ENCODE measurements at regions of chr1 and their contacts with region 1.

Region 1: DNA sequence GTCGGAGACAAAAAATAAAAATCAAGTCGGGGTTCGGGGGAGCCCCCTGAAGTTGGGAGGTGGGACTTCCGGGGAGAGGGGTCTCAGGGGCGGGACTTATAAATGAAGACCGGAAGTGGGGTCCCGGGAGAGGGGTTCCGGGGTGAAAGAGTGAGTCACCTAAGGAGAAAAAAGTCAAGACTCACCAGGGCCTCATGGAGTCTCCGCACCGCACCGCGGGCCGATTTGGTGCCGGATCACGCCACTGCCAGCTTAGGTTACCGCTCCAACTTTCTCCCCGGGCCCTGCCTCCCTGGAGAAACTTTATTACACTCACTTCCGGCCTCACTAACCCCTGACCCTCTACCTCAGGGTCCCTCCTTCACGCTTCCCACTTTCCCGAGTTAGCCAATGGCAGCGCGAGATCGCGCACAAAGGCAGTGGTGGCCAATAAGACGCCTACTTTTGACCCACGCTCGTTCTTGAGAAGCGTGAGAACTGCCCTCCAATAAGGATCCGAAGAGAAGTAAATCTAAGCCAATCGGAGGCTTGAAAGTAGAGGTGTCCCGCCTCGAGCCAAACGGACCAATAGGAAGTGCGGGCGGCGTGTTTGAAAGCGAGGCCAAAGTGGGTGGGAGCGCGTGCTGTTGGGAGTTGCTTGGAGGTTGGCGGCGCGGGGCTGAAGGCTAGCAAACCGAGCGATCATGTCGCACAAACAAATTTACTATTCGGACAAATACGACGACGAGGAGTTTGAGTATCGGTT is at the start of gene CKS1B:
- DNase-seq: peak; percentile 99 to 100
- ATAC-seq: peak; percentile 65 to 77
- H3K4me3 ChIP-seq: peak within 1 kb of the TSS; percentile 65
- H3K27ac ChIP-seq: peak within 1 kb of the TSS; percentile 98 to 100
- H3K4me1 ChIP-seq: peaks cover 37% of the 10 kb centered on the region
- CTCF ChIP-seq: no peak
- EP300 ChIP-seq: no peak
- POLR2A ChIP-seq: peak; percentile 24; the same call in 1 of the 2 replicates
- RAD21 ChIP-seq: no peak
- polyA plus RNA-seq, gene CKS1B: 725 and 787 TPM in 2 replicates

Region 2: GRCh38 chr1:154884869-154885701 is 89.2 kb before region 1 on chr1:
- CTCF ChIA-PET with region 1: no interaction called
- POLR2A ChIA-PET with region 1: no interaction called
- DNase-seq: no peak
- ATAC-seq: no peak
- H3K4me3 ChIP-seq: no peak overlapping the region
- H3K27ac ChIP-seq: no peak overlapping the region
- H3K4me1 ChIP-seq: peaks cover 4% of the 10 kb centered on the region; the same call in 1 of the 3 replicates
- CTCF ChIP-seq: no peak
- EP300 ChIP-seq: no peak
- POLR2A ChIP-seq: no peak
- RAD21 ChIP-seq: no peak

Region 3: DNA sequence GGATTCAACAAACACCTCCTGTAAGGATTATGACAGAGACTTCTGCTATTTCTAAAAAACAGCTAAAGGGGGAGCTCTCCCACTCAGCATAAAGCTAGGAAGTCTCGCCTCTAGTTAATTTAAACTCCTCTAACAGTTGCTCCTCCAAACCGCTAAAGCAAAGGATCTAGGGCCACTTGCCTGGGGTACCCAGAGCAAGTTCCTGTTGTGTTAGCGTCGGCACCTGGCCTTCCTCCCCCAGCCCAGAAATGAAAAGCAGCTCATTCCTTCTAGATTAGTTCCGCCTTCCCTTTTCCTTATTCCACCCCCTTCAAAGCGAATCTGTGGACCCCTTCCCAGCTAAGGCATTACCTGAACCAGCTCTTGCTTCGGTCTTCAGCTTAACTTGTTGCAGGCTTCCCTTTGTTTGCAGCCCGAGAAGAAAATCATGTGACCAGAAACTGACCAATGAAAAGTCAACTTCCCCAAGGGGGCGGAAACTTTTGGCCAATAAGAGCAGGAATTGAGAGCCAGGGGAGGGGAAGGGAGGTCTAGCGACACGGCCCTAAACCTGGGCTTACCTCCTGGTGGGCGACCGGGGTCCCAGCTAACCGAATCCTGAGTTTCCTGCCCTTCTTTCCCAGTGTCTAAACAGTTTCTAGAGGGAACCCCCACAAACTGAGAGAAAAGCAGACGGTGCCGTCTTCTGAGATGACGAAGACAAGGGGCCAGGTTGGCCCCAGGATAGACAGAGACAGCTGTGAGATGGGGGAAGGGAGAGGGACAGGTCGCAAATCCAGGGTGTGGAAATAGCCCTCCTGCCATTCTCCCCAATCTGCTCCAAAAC is 18.3 kb before region 1 on chr1 and contains the start of gene PBXIP1:
- CTCF ChIA-PET with region 1: no interaction called
- POLR2A ChIA-PET with region 1: interaction called, 67 read pairs
- DNase-seq: peak; percentile 87 to 99
- ATAC-seq: peak; percentile 83 to 90
- H3K4me3 ChIP-seq: peak within 1 kb of the TSS; percentile 49
- H3K27ac ChIP-seq: peak within 1 kb of the TSS; percentile 49 to 82
- H3K4me1 ChIP-seq: peaks cover 27% of the 10 kb centered on the region
- CTCF ChIP-seq: 0 out of 3 replicates have a peak, but pooled peaks have one; percentile 29
- EP300 ChIP-seq: no peak
- POLR2A ChIP-seq: no peak
- RAD21 ChIP-seq: no peak; a peak in 1 of 5 replicates
- polyA plus RNA-seq, gene PBXIP1: 15.0 and 16.8 TPM in 2 replicates

Region 4: GRCh38 chr1:154961497-154962262 is 12.6 kb before region 1 on chr1 and contains the start of gene PYGO2:
- CTCF ChIA-PET with region 1: no interaction called
- POLR2A ChIA-PET with region 1: interaction called, 67 read pairs
- DNase-seq: peak; percentile 76 to 81
- ATAC-seq: peak; percentile 82 to 90
- H3K4me3 ChIP-seq: peak within 1 kb of the TSS; percentile 74
- H3K27ac ChIP-seq: peak within 1 kb of the TSS; percentile 97
- H3K4me1 ChIP-seq: peaks cover 28% of the 10 kb centered on the region
- CTCF ChIP-seq: peak; percentile 90
- EP300 ChIP-seq: no peak
- POLR2A ChIP-seq: peak; percentile 66
- RAD21 ChIP-seq: peak in 1 of 2 experiments; percentile 81; a peak in 4 of 5 replicates
- polyA plus RNA-seq, gene PYGO2: 24.6 and 25.8 TPM in 2 replicates

Region 5: GRCh38 chr1:154992721-154993571 is 18.7 kb after region 1 on chr1:
- CTCF ChIA-PET with region 1: no interaction called
- POLR2A ChIA-PET with region 1: interaction called, 91 read pairs
- DNase-seq: peak in 1 of 2 experiments; percentile 63
- ATAC-seq: peak; percentile 70 to 75
- H3K4me3 ChIP-seq: no peak overlapping the region
- H3K27ac ChIP-seq: peak overlapping the region; percentile 16 to 63; a peak in 4 of 6 replicates
- H3K4me1 ChIP-seq: peaks cover 29% of the 10 kb centered on the region
- CTCF ChIP-seq: peak; percentile 29
- EP300 ChIP-seq: no peak
- POLR2A ChIP-seq: no peak
- RAD21 ChIP-seq: peak in 1 of 2 experiments; percentile 30; a peak in 2 of 5 replicates

Region 6: GRCh38 chr1:155001675-155002463 is 27.6 kb after region 1 on chr1:
- CTCF ChIA-PET with region 1: no interaction called
- POLR2A ChIA-PET with region 1: interaction called, 91 read pairs
- DNase-seq: peak; percentile 96 to 100
- ATAC-seq: peak; percentile 51 to 73
- H3K4me3 ChIP-seq: peak overlapping the region; percentile 80
- H3K27ac ChIP-seq: peak overlapping the region; percentile 98 to 100
- H3K4me1 ChIP-seq: peaks cover 43% of the 10 kb centered on the region
- CTCF ChIP-seq: peak; percentile 46
- EP300 ChIP-seq: no peak
- POLR2A ChIP-seq: no peak; the same call in 1 of the 2 replicates
- RAD21 ChIP-seq: peak; percentile 37 to 62

Region 7: DNA sequence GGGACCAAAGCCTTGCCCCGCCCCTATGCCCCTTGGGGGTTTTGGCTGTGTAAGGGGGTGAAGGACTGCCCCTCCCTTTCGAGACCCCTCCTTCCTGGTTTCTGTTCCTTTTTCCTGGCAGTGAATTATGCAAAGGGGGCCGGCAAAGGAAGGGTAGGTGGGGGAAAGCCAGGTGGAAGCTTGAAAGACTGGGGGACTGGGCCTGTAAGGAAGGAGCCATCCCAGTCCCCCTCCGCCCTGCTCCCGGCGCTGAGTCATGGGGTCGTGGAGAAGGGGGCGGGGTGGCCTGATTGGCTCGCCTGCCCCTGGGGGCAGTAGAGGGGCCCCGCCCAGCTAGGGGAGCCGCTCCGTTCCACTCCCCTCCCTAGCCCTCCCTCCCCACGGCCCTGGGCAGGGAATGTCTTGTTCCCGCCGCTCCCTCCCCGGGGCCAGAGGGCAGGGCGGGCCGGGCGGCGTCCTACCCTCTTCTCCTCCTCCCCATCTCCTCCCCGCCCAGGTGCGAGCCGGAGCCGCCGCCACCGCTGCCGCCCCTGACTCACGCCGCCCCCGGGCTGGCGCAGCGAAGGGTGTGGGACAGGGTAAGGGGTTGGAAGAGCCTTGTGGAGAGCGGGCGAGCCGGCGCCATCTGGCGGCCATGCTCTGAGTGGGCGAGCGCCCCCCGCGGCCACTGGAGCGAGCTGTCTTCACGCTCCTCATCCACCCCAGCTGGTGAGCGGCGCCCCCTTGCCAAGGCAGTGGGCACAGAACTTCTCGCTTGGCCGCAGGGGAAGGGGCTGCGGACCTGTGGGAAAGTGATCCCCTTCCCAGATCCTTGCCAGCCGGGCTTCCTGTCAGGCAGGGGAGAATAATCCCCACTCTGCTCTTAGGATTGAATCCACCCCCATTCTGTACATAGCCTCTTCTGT is 43.1 kb after region 1 on chr1:
- CTCF ChIA-PET with region 1: no interaction called
- POLR2A ChIA-PET with region 1: interaction called, 23 read pairs
- DNase-seq: peak; percentile 84 to 98
- ATAC-seq: peak; percentile 83 to 90
- H3K4me3 ChIP-seq: peak overlapping the region; percentile 29
- H3K27ac ChIP-seq: peak overlapping the region; percentile 96 to 99
- H3K4me1 ChIP-seq: peaks cover 74% of the 10 kb centered on the region
- CTCF ChIP-seq: peak; percentile 100
- EP300 ChIP-seq: peak in 1 of 2 experiments; percentile 30; a peak in 1 of 5 replicates
- POLR2A ChIP-seq: no peak
- RAD21 ChIP-seq: peak; percentile 85 to 97

Region 8: GRCh38 chr1:155063550-155064110 is 89.4 kb after region 1 on chr1 and contains the start of gene EFNA4:
- CTCF ChIA-PET with region 1: no interaction called
- POLR2A ChIA-PET with region 1: interaction called, 22 read pairs
- DNase-seq: peak; percentile 89 to 91
- ATAC-seq: peak; percentile 72 to 86
- H3K4me3 ChIP-seq: peak within 1 kb of the TSS; percentile 77
- H3K27ac ChIP-seq: peak within 1 kb of the TSS; percentile 81 to 91
- H3K4me1 ChIP-seq: peaks cover 23% of the 10 kb centered on the region
- CTCF ChIP-seq: no peak
- EP300 ChIP-seq: no peak
- POLR2A ChIP-seq: peak; percentile 77
- RAD21 ChIP-seq: no peak
- polyA plus RNA-seq, gene EFNA4: 3.1 and 4.9 TPM in 2 replicates